Endothelial cell of umbilical vein (primary cell): ENCODE measurements at regions of chr4 and their contacts with region 1.

Region 1: DNA sequence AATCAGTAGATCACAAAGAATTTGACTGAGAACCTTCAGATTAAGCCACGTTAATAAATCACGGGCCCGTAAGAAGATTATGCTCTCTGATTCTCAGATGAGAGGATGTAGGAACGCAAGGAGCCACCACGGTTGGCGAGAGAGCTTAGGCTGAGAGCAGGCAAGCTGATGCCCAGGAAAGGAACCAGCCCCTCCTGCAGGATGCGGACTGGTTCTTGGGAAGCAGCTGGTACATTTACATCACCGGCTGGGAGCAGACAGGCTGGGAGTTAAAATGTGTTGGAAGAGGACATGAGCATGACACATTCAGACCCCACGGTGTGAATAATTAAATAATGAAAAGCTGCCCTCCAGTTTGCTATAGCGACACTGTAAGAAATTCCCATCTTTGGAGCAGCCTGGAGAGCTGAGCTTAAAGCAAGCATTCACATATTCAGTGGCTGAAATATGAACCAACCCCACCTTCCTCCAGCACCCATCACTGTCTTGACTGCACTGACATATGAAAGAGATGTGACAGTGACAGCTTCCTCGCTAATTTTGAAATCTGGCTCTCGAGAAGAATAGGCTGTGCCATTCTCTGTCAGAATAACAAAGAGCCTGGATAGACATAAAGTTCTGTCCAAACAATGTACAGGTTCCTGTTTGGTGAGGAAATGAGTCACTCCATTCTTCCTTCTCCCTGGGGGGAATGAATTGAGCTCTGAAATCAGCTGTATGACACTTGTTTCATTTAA is 33.1 kb downstream of the LNX1 start:
- DNase-seq: peak; percentile 88
- H3K4me3 ChIP-seq: peak overlapping the region in 1 of 3 experiments; percentile 44
- H3K27ac ChIP-seq: peak overlapping the region; percentile 95
- H3K4me1 ChIP-seq: peaks cover 36% of the 10 kb centered on the region
- H3K27me3 ChIP-seq: no peaks in the 10 kb centered on the region
- CTCF ChIP-seq: peak in 1 of 2 donors; percentile 4
- POLR2A ChIP-seq: peak; percentile 39

Region 2: GRCh38 chr4:53015681-53016080 is 542.6 kb before region 1 on chr4:
- CTCF ChIA-PET with region 1: no interaction called
- POLR2A ChIA-PET with region 1: no interaction called
- dilution Hi-C with region 1: no loop called
- intact Hi-C with region 1: loop called (anchors 10 kb)
- DNase-seq: peak; percentile 81
- H3K4me3 ChIP-seq: no peak overlapping the region
- H3K27ac ChIP-seq: no peak overlapping the region
- H3K4me1 ChIP-seq: peaks cover 18% of the 10 kb centered on the region
- H3K27me3 ChIP-seq: no peaks in the 10 kb centered on the region
- CTCF ChIP-seq: peak; percentile 53 to 63
- POLR2A ChIP-seq: no peak

Region 3: DNA sequence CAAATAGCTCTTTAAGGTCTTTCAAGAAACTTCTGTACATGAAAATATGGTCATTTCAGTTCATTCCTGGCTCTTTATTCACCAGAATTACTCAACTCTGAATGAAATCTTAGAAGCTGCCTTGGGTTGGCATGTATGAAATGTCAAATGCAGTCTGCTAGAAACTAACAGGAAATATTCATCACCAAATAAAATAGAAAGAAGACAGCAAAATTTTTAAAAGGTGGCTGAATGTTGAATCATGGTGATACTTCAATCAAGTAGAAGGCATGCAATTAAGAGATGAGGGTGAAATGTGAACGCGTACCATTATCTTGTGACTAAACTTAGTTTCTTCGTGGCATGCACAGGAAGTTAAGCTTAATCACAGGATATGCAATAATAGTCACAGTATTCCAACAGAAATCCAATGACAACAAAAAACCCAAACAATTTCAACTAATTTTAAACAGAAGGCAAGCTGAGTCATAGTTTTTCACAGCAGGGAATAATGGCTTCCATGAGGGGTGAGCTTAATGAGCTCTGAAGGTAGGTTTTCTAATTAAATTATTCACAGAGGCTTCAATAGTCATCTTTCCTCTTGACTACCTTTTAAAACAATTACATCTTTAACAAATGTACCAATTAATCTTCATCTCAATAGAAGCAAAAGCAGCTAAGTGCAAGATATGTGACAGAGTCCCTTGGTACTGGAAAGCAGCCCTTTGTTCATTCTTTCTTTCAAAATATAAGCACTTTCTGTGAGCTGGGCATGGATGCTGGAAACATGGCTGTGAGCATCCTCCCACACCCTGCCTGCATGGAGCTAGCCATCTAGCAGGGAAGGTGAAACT is 236.9 kb before region 1 on chr4:
- CTCF ChIA-PET with region 1: interaction called, 3 read pairs
- POLR2A ChIA-PET with region 1: no interaction called
- dilution Hi-C with region 1: no loop called
- intact Hi-C with region 1: loop called (anchors 5 kb)
- DNase-seq: peak; percentile 94
- H3K4me3 ChIP-seq: peak overlapping the region in 1 of 3 experiments; percentile 32
- H3K27ac ChIP-seq: peak overlapping the region; percentile 98
- H3K4me1 ChIP-seq: peaks cover 29% of the 10 kb centered on the region
- H3K27me3 ChIP-seq: no peaks in the 10 kb centered on the region
- CTCF ChIP-seq: no peak
- POLR2A ChIP-seq: peak; percentile 56

Region 4: GRCh38 chr4:53490965-53491622 is 67.1 kb before region 1 on chr4:
- CTCF ChIA-PET with region 1: interaction called, 18 read pairs
- POLR2A ChIA-PET with region 1: no interaction called
- dilution Hi-C with region 1: no loop called
- intact Hi-C with region 1: loop called (anchors 2 kb)
- DNase-seq: peak; percentile 85
- H3K4me3 ChIP-seq: no peak overlapping the region
- H3K27ac ChIP-seq: no peak overlapping the region
- H3K4me1 ChIP-seq: peaks cover 6% of the 10 kb centered on the region
- H3K27me3 ChIP-seq: no peaks in the 10 kb centered on the region
- CTCF ChIP-seq: peak; percentile 52 to 55
- POLR2A ChIP-seq: no peak

Region 5: GRCh38 chr4:53541577-53542206 is 16.5 kb before region 1 on chr4:
- CTCF ChIA-PET with region 1: interaction called, 29 read pairs
- POLR2A ChIA-PET with region 1: interaction called, 8 read pairs
- dilution Hi-C with region 1: no loop called
- intact Hi-C with region 1: loop called (anchors 2 kb)
- DNase-seq: peak; percentile 84
- H3K4me3 ChIP-seq: no peak overlapping the region
- H3K27ac ChIP-seq: peak overlapping the region; percentile 56
- H3K4me1 ChIP-seq: peaks cover 35% of the 10 kb centered on the region
- H3K27me3 ChIP-seq: no peaks in the 10 kb centered on the region
- CTCF ChIP-seq: no peak
- POLR2A ChIP-seq: no peak

Region 6: GRCh38 chr4:53576676-53577372 is 18.6 kb after region 1 on chr4:
- CTCF ChIA-PET with region 1: interaction called, 8 read pairs
- POLR2A ChIA-PET with region 1: interaction called, 5 read pairs
- dilution Hi-C with region 1: no loop called
- intact Hi-C with region 1: loop called (anchors 2 kb)
- DNase-seq: peak; percentile 90
- H3K4me3 ChIP-seq: no peak overlapping the region
- H3K27ac ChIP-seq: peak overlapping the region; percentile 40
- H3K4me1 ChIP-seq: peaks cover 36% of the 10 kb centered on the region
- H3K27me3 ChIP-seq: no peaks in the 10 kb centered on the region
- CTCF ChIP-seq: no peak
- POLR2A ChIP-seq: peak; percentile 35

Region 7: DNA sequence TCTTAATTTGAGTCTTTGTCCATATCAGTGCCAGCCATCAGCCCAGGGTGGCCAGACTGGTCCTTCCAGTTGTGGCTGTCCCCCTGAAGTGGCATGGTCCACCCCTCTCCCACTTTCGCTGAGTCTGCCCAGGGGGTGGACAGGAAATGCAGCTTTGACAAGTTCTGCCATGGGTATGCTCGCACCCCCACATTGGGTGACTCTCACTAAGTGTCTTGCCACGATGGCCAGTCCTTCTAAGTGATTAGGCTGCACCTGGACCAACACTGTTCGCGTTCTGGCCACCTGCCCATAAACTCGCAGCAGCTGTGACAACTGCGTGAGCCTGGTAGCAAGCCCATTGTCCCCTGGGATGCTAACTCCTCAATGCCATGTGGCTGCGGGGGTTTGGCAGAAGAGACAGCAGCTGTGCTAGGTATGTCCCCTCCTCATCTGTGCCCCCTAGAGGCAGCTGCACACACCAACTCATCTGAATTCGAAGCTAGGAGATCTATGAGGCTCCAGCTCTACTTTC is 43.1 kb after region 1 on chr4:
- CTCF ChIA-PET with region 1: interaction called, 13 read pairs
- POLR2A ChIA-PET with region 1: no interaction called
- dilution Hi-C with region 1: no loop called
- intact Hi-C with region 1: no loop called
- DNase-seq: peak; percentile 22
- H3K4me3 ChIP-seq: no peak overlapping the region
- H3K27ac ChIP-seq: no peak overlapping the region
- H3K4me1 ChIP-seq: peaks cover 2% of the 10 kb centered on the region
- H3K27me3 ChIP-seq: no peaks in the 10 kb centered on the region
- CTCF ChIP-seq: peak; percentile 35 to 57
- POLR2A ChIP-seq: no peak

Region 8: DNA sequence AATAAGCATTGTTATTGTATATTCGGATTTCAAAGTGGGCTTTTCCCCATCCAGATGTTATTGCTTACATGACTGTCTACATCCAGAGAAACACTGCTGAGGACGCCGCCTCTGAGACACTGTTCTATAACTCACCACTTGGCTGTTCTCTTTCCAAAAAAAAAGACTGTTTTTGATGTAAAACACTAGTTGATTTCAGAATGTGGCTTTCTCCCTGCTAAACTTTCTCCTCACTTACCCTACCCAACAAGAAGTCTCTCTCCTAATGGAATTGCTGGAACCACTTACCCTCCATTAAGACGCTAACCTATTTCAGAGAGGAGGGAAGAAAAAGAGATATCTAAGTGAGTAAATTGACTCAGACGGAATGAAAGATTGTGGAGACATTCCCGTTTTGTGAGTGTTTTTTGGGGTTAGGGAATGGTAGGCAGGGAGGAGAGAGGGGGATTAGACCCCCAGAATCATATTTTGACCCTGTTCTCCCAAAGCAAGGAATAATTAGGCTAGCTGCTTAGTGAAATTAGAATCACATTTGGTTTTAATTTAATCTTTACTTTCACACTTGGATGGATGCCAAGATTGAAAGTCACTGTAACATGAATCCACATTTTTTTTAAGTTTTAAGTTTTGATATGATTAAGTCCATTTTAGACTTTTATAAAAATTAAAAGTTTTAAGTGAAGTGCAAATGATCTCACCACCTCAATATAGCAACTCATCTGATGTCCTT is 331.3 kb after region 1 on chr4:
- CTCF ChIA-PET with region 1: no interaction called
- POLR2A ChIA-PET with region 1: no interaction called
- dilution Hi-C with region 1: no loop called
- intact Hi-C with region 1: no loop called
- DNase-seq: no peak
- H3K4me3 ChIP-seq: no peak overlapping the region
- H3K27ac ChIP-seq: no peak overlapping the region
- H3K4me1 ChIP-seq: no peaks in the 10 kb centered on the region
- H3K27me3 ChIP-seq: peaks cover 5 to 10% of the 10 kb centered on the region in 2 experiments
- CTCF ChIP-seq: no peak
- POLR2A ChIP-seq: no peak

Region 9: GRCh38 chr4:53997901-53998300 is 439.7 kb after region 1 on chr4:
- CTCF ChIA-PET with region 1: no interaction called
- POLR2A ChIA-PET with region 1: no interaction called
- dilution Hi-C with region 1: no loop called
- intact Hi-C with region 1: no loop called
- DNase-seq: peak; percentile 76
- H3K4me3 ChIP-seq: no peak overlapping the region
- H3K27ac ChIP-seq: no peak overlapping the region
- H3K4me1 ChIP-seq: peaks cover 28% of the 10 kb centered on the region
- H3K27me3 ChIP-seq: no peaks in the 10 kb centered on the region
- CTCF ChIP-seq: no peak
- POLR2A ChIP-seq: no peak

Region 10: GRCh38 chr4:54256506-54257486 is 698.6 kb after region 1 on chr4:
- CTCF ChIA-PET with region 1: no interaction called
- POLR2A ChIA-PET with region 1: no interaction called
- dilution Hi-C with region 1: no loop called
- intact Hi-C with region 1: no loop called
- DNase-seq: no peak
- H3K4me3 ChIP-seq: no peak overlapping the region
- H3K27ac ChIP-seq: no peak overlapping the region
- H3K4me1 ChIP-seq: peaks cover 4% of the 10 kb centered on the region
- H3K27me3 ChIP-seq: peaks cover 3 to 13% of the 10 kb centered on the region in 2 experiments
- CTCF ChIP-seq: no peak
- POLR2A ChIP-seq: no peak